Endothelial cell of umbilical vein (primary cell): ENCODE measurements at regions of chr19 and their contacts with region 1.

Region 1: DNA sequence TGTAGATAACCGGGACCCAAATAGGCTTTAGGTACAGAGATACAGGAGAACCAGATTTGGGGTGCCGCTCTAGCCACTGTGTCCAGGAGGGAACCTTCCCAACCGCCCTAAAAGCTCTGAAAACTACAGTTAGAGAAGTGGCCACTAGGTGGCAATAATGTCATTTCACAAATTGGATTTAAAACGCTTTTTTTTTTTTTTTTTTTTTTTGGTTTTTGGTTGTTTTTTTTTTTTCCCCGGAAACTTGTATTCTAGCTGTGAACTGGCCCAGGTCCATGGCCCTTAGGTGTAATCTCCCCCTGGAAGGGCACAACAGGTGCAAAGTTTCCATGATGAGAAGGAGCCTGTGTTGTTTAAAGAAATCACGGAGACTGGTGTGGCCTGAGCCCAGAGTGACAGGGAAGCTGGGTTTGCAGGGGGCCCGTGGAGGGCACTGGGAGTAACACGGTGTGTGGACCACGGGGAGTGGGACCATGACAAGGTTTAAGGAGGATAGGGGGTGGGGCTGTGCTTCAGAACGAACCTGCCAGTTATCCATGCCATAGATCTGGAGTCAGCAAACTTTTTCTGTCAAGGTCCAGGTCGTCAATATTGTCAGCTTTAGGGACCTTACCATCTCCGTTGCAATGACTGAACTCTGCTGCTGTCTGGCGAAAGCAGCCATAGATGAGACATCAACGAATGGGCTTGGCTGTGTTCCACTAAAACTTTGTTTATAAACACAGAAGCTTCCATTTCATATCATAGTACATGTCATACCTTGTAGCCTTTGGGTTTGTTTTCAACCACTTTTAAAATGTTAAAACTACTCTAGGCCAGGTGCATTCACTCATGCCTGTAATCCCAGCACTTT is 10.1 kb downstream of the OR1I1 start:
- DNase-seq: peak; percentile 58
- H3K4me3 ChIP-seq: no peak overlapping the region
- H3K27ac ChIP-seq: no peak overlapping the region
- H3K4me1 ChIP-seq: no peaks in the 10 kb centered on the region
- H3K27me3 ChIP-seq: no peaks in the 10 kb centered on the region
- CTCF ChIP-seq: peak; percentile 55 to 60
- POLR2A ChIP-seq: no peak

Region 2: GRCh38 chr19:15081911-15082310 is 10.2 kb before region 1 on chr19 and contains the start of gene OR1I1:
- CTCF ChIA-PET with region 1: interaction called, 10 read pairs
- POLR2A ChIA-PET with region 1: no interaction called
- dilution Hi-C with region 1: no loop called
- intact Hi-C with region 1: no loop called
- DNase-seq: no peak
- H3K4me3 ChIP-seq: no peak within 1 kb of the TSS
- H3K27ac ChIP-seq: no peak within 1 kb of the TSS
- H3K4me1 ChIP-seq: no peaks in the 10 kb centered on the region
- H3K27me3 ChIP-seq: no peaks in the 10 kb centered on the region
- CTCF ChIP-seq: no peak
- POLR2A ChIP-seq: no peak
- total RNA-seq, gene OR1I1: not detected in 2 replicates

Region 3: DNA sequence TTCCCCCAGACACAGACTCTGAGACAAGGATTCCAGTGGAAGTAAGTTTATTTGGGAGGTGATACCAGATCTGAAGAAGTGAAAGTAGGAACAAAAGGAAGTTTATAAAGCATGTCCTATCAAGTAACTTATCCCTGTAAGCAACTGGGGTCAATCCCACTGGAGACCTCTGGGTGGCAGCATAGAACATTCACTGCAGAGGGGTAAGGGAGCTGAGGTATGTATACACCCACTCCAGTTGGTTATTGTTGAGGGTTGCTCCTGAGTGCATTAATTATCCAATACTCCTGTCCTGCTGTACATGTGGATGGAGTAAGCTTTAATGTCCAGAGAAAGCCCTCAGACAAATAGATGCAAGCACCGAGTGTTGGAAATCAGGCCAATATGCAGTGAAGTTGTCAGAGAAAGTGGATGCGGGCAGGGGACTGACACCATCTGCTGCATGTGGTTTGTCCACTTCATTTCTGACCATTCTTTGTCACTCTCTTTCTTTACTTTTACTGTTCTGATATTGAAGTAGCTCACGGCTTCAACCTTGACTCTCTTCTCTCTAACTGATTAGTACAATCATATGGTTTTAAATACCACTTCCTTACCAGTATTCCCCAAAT is 62.0 kb after region 1 on chr19:
- CTCF ChIA-PET with region 1: interaction called, 103 read pairs
- POLR2A ChIA-PET with region 1: no interaction called
- dilution Hi-C with region 1: no loop called
- intact Hi-C with region 1: loop called (anchors 1 kb)
- DNase-seq: peak; percentile 52
- H3K4me3 ChIP-seq: no peak overlapping the region
- H3K27ac ChIP-seq: no peak overlapping the region
- H3K4me1 ChIP-seq: no peaks in the 10 kb centered on the region
- H3K27me3 ChIP-seq: peaks cover 0 to 7% of the 10 kb centered on the region in 2 experiments
- CTCF ChIP-seq: peak; percentile 51 to 56
- POLR2A ChIP-seq: no peak

Region 4: DNA sequence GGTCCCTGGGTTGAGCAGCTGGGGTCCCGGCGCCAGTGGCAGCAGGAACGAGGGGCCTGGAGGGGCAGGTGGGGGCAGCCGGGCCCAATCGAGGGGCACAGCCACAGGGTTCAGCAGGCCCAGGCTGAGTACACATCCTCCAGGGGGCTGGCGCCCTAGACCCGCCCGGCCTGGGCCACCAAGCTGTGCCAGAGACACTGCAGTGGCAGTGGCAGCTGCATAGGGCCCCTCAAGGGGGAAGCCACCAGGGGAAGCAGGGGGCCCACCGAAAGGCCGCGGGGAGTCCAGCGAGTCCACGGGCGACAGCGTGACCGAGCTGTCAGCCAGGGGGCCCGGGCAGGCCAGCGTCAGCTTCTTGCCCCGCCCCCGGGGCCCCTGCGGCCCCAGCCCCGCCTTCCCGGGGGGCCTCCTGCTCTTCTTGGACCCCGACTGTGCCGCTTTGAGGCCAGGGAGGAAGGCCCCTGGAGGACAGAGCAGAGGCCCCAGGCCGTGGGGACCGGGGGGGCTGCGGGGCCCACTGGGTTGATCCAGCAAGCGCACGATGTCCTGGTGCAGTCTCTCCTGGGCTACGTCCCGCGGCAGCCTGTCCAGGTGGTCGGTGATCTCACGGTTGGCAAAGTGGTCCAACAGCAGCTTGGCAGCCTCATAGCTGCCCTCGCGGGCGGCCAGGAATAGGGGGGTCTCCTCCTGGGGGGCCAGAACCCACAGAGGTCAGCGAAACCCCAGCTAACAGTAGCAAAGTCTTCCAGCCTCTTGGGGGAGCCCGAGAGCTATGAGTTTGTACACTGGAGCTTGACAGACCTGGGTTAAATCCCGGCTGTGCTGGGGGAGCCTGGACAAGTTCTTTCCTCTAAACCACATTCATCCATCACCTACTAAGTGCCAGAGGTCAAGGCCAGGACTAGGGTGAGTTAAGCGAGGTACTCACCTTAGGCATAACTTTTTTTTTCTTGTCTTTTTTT is 69.2 kb after region 1 on chr19:
- CTCF ChIA-PET with region 1: interaction called, 14 read pairs
- POLR2A ChIA-PET with region 1: no interaction called
- dilution Hi-C with region 1: no loop called
- intact Hi-C with region 1: no loop called
- DNase-seq: no peak
- H3K4me3 ChIP-seq: no peak overlapping the region
- H3K27ac ChIP-seq: no peak overlapping the region
- H3K4me1 ChIP-seq: no peaks in the 10 kb centered on the region
- H3K27me3 ChIP-seq: no peaks in the 10 kb centered on the region
- CTCF ChIP-seq: peak; percentile 20 to 45
- POLR2A ChIP-seq: no peak